Adrenal gland (tissue), 19 donors: ENCODE measurements at regions of chr7 and their contacts with region 1.

Region 1: GRCh38 chr7:74206589-74207120 is 3.2 kb upstream of the LAT2 start:
- DNase-seq: peak; percentile 78 to 96 (median 91)
- H3K4me3 ChIP-seq: peak overlapping the region in 1 of 4 donors; percentile 40
- H3K27ac ChIP-seq: no peak overlapping the region
- H3K4me1 ChIP-seq: peaks cover 0 to 4% of the 10 kb centered on the region in 2 donors
- H3K27me3 ChIP-seq: no peaks in the 10 kb centered on the region
- CTCF ChIP-seq: peak; percentile 94 to 97 (median 97)
- POLR2A ChIP-seq: no peak

Region 2: GRCh38 chr7:74068393-74069085 is 138.1 kb before region 1 on chr7:
- intact Hi-C with region 1: loop called in 1 of 2 experiments (anchors 5 kb)
- DNase-seq: no peak
- H3K4me3 ChIP-seq: no peak overlapping the region
- H3K27ac ChIP-seq: no peak overlapping the region
- H3K4me1 ChIP-seq: no peaks in the 10 kb centered on the region
- H3K27me3 ChIP-seq: no peaks in the 10 kb centered on the region
- CTCF ChIP-seq: no peak
- POLR2A ChIP-seq: no peak

Region 3: DNA sequence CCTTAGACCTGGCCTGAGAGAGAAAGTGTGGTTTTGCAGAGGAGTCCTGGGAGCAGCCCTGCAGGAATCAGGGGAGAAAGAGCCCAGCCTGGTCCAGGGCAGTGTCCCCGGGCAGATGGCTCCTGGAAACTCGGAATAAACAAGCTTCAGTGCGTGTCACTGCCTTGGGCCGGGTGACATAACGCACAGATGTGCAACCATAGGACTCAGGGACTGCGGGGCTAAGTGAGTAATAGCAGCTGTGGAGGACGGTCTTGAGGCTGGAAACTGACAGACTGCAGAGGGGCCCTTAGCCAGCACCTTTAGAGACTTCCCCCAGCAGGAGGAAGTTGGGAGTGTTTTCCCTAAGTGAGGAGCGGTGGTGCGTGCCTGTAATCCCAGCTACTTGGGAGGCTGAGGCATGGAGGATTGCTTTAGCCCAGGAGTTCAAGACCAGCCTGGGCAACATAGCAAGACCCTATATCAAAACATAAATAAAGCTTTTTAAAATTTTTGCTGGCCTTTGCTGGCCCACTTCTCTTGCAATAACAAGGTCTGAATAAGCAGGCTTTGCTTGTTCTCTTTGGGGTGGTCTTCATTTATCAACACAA is 77.3 kb after region 1 on chr7:
- intact Hi-C with region 1: no loop called
- DNase-seq: no peak
- H3K4me3 ChIP-seq: no peak overlapping the region
- H3K27ac ChIP-seq: no peak overlapping the region
- H3K4me1 ChIP-seq: peaks cover 19 to 27% of the 10 kb centered on the region in 2 donors
- H3K27me3 ChIP-seq: no peaks in the 10 kb centered on the region
- CTCF ChIP-seq: no peak
- POLR2A ChIP-seq: no peak